Naive thymus-derived CD4-positive, alpha-beta T cell (primary cell): ENCODE measurements at regions of chr10 and their contacts with region 1.

Region 1: DNA sequence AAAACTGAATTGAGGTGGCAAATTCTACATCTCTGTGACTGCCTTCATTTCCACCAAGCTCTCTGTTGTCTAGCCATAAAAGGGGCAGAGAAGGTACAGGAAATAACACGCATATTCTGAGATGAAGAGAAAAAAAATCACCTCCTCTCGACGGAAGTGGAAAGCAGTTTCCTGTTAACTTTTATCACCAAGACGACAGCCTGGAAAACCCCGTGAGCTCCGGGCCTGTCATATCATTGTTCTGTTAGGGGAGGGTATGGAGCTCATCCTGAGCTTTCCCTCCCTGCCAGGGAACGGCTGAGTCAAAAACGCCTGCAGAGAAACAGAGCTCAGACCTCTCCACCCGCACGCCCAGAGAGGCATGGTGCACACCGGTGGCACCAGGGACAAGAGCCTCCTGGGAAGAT is 200.3 kb downstream of the PRPF18 start:
- DNase-seq: peak; percentile 37 to 94 (median 91)
- ATAC-seq: peak; percentile 94
- H3K4me3 ChIP-seq: peak overlapping the region; percentile 17
- H3K4me3 Mint-ChIP-seq: peak overlapping the region in 9 of 10 donors; percentile 76 to 88 (median 84)
- H3K27ac ChIP-seq: peak overlapping the region; percentile 93
- H3K27ac Mint-ChIP-seq: no peak overlapping the region
- H3K4me1 ChIP-seq: peaks cover 29 to 50% of the 10 kb centered on the region in 2 donors
- H3K4me1 Mint-ChIP-seq: peaks cover 11 to 37% (median 20%) of the 10 kb centered on the region in 7 donors
- H3K27me3 ChIP-seq: no peaks in the 10 kb centered on the region
- H3K27me3 Mint-ChIP-seq: no peaks in the 10 kb centered on the region

Region 2: GRCh38 chr10:13299437-13300287 is 487.4 kb before region 1 on chr10 and contains the start of gene PHYH:
- CTCF ChIA-PET with region 1: no interaction called
- POLR2A ChIA-PET with region 1: no interaction called
- intact Hi-C with region 1: loop called in 1 of 2 experiments (anchors 1 kb)
- DNase-seq: peak; percentile 70 to 88 (median 78)
- ATAC-seq: peak; percentile 77
- H3K4me3 ChIP-seq: peak within 1 kb of the TSS; percentile 69
- H3K4me3 Mint-ChIP-seq: peak within 1 kb of the TSS; percentile 70 to 96 (median 86)
- H3K27ac ChIP-seq: peak within 1 kb of the TSS; percentile 95
- H3K27ac Mint-ChIP-seq: peak within 1 kb of the TSS; percentile 92 to 99 (median 97)
- H3K4me1 ChIP-seq: peaks cover 16 to 19% of the 10 kb centered on the region in 2 donors
- H3K4me1 Mint-ChIP-seq: peaks cover 13 to 34% (median 22%) of the 10 kb centered on the region in 7 donors
- H3K27me3 ChIP-seq: no peaks in the 10 kb centered on the region
- H3K27me3 Mint-ChIP-seq: no peaks in the 10 kb centered on the region
- total RNA-seq, gene PHYH: 11.2 to 17.7 (median 13.2) TPM

Region 3: GRCh38 chr10:13776861-13777311 is 10.1 kb before region 1 on chr10:
- CTCF ChIA-PET with region 1: no interaction called
- POLR2A ChIA-PET with region 1: interaction called, 3 read pairs
- intact Hi-C with region 1: loop called in 1 of 2 experiments (anchors 1 kb)
- DNase-seq: no peak
- ATAC-seq: no peak
- H3K4me3 ChIP-seq: no peak overlapping the region
- H3K4me3 Mint-ChIP-seq: no peak overlapping the region
- H3K27ac ChIP-seq: no peak overlapping the region
- H3K27ac Mint-ChIP-seq: no peak overlapping the region
- H3K4me1 ChIP-seq: peaks cover 0 to 4% of the 10 kb centered on the region in 2 donors
- H3K4me1 Mint-ChIP-seq: peaks cover 0 to 6% (median 0%) of the 10 kb centered on the region in 7 donors
- H3K27me3 ChIP-seq: no peaks in the 10 kb centered on the region
- H3K27me3 Mint-ChIP-seq: peaks cover 8 to 18% (median 11%) of the 10 kb centered on the region in 5 donors

Region 4: DNA sequence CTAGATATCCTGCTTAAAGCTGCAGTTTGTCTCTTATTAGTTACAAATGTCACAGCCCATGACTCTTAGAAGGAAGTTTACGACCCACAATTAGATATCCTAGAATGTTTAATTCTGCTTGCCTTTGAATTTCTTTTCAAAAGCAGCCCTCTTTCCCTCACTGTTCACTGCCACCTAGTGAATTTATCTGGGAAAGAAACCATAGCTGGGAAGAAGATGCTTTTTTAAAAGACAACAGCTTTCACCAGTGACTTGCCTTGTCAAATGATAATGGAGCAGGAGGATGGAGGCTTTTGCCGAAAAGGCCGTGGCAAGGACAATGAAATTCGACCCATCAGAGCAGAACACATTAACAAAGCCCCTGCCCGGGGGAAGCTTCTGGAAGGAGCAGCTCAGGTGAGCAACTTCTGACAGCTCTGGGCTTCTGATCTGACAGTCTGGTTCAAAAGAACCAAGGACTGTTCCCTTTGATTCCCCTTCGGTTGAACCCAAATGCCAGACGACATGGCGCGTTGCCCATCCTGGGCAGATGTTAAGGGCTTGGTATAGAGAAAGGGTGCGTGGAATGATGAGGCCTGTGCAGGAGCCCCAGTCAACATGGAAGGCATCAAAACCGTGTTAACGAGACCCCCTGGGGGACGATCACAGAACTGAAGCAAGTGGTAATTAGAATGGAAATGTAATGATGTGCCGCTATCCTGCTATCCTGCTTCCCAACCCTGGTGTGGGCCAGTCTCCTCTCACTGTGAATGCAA is 306.9 kb after region 1 on chr10:
- CTCF ChIA-PET with region 1: interaction called, 5 read pairs
- POLR2A ChIA-PET with region 1: interaction called, 3 read pairs
- intact Hi-C with region 1: loop called in 1 of 2 experiments (anchors 1 kb)
- DNase-seq: peak in 4 of 9 donors; percentile 6 to 13 (median 12)
- ATAC-seq: no peak
- H3K4me3 ChIP-seq: no peak overlapping the region
- H3K4me3 Mint-ChIP-seq: no peak overlapping the region
- H3K27ac ChIP-seq: no peak overlapping the region
- H3K27ac Mint-ChIP-seq: peak overlapping the region in 1 of 9 donors; percentile 20
- H3K4me1 ChIP-seq: no peaks in the 10 kb centered on the region
- H3K4me1 Mint-ChIP-seq: peaks cover 0 to 13% (median 4%) of the 10 kb centered on the region in 7 donors
- H3K27me3 ChIP-seq: no peaks in the 10 kb centered on the region
- H3K27me3 Mint-ChIP-seq: no peaks in the 10 kb centered on the region

Region 5: GRCh38 chr10:14604181-14605142 is 817.4 kb after region 1 on chr10:
- CTCF ChIA-PET with region 1: no interaction called
- POLR2A ChIA-PET with region 1: no interaction called
- intact Hi-C with region 1: loop called in 1 of 2 experiments (anchors 1 kb)
- DNase-seq: peak; percentile 56 to 82 (median 65)
- ATAC-seq: peak; percentile 90
- H3K4me3 ChIP-seq: peak overlapping the region; percentile 40
- H3K4me3 Mint-ChIP-seq: peak overlapping the region; percentile 86 to 99 (median 97)
- H3K27ac ChIP-seq: peak overlapping the region; percentile 73
- H3K27ac Mint-ChIP-seq: peak overlapping the region; percentile 57 to 99 (median 94)
- H3K4me1 ChIP-seq: peaks cover 29 to 31% of the 10 kb centered on the region in 2 donors
- H3K4me1 Mint-ChIP-seq: peaks cover 45 to 62% (median 57%) of the 10 kb centered on the region in 7 donors
- H3K27me3 ChIP-seq: no peaks in the 10 kb centered on the region
- H3K27me3 Mint-ChIP-seq: peaks cover 0 to 2% (median 0%) of the 10 kb centered on the region in 5 donors

Region 6: DNA sequence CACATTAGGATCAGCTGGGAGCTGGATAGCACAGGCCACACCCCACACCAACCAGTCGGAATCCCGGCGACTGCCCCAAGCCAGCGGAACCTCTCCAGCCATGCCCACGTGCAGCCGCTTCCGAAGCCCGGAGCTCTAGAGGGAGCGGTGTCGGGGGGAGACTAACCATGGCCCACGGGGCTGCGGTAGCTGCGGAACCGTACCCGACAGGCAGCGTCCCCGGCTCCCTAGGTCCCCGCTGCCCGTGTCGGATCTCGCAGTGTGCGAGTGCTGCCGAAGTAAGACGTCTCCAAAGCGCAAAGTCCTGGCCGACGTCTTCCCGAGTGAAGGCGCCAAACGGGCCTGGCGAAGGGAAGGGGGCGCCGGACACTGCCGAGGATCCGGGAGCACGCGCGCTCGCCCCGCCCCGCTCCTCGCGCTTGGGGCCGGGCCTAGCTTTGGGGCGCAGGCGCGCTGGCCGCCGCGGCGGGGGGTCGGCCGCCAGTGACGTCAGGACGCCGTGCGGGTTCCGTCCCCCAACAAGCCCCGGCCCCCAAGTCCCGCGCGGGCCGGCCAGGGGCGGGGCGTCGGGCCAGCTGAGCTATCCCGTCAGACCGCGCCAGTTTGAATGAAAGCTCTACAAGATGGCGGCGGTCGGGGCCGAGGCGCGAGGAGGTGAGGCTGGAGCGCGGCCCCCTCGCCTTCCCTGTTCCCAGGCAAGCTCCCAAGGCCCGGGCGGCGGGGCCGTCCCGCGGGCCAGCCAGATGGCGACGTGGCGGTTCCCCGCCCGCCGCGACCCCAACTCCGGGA is 1091.4 kb after region 1 on chr10 and contains the start of gene SUV39H2:
- CTCF ChIA-PET with region 1: no interaction called
- POLR2A ChIA-PET with region 1: no interaction called
- intact Hi-C with region 1: loop called (anchors 2 to 5 kb)
- DNase-seq: peak; percentile 81 to 97 (median 87)
- ATAC-seq: peak; percentile 93
- H3K4me3 ChIP-seq: peak within 1 kb of the TSS; percentile 92
- H3K4me3 Mint-ChIP-seq: peak within 1 kb of the TSS; percentile 92 to 97 (median 94)
- H3K27ac ChIP-seq: peak within 1 kb of the TSS; percentile 87
- H3K27ac Mint-ChIP-seq: peak within 1 kb of the TSS; percentile 71 to 94 (median 91)
- H3K4me1 ChIP-seq: peaks cover 4 to 7% of the 10 kb centered on the region in 2 donors
- H3K4me1 Mint-ChIP-seq: peaks cover 7 to 46% (median 41%) of the 10 kb centered on the region in 7 donors
- H3K27me3 ChIP-seq: no peaks in the 10 kb centered on the region
- H3K27me3 Mint-ChIP-seq: no peaks in the 10 kb centered on the region
- total RNA-seq, gene SUV39H2: 2.4 to 25.0 (median 6.8) TPM